Activated CD8-positive, alpha-beta memory T cell treated with anti-CD3 and anti-CD28 coated beads, Interleukin-2, amount 10 ng/mL, durations not matched to agents 7 days and 5 days (primary cell): ENCODE measurements at regions of chr22 and their contacts with region 1.

Region 1: GRCh38 chr22:50525390-50526068 is at the start of gene SCO2:
- DNase-seq: peak; percentile 97
- ATAC-seq: peak; percentile 59
- H3K4me3 Mint-ChIP-seq: peak within 1 kb of the TSS; percentile 80
- H3K27ac Mint-ChIP-seq: peak within 1 kb of the TSS; percentile 94
- H3K4me1 Mint-ChIP-seq: peaks cover 44% of the 10 kb centered on the region
- H3K27me3 Mint-ChIP-seq: no peaks in the 10 kb centered on the region
- total RNA-seq, gene SCO2: 9.1 to 11.6 TPM

Region 2: GRCh38 chr22:50250555-50251476 is 274.7 kb before region 1 on chr22 and contains the start of gene HDAC10:
- CTCF ChIA-PET with region 1: interaction called, 13 read pairs
- DNase-seq: peak; percentile 92
- ATAC-seq: peak; percentile 88
- H3K4me3 Mint-ChIP-seq: peak within 1 kb of the TSS; percentile 84
- H3K27ac Mint-ChIP-seq: peak within 1 kb of the TSS; percentile 85
- H3K4me1 Mint-ChIP-seq: peaks cover 27% of the 10 kb centered on the region
- H3K27me3 Mint-ChIP-seq: no peaks in the 10 kb centered on the region
- total RNA-seq, gene HDAC10: 75.2 to 96.3 TPM

Region 3: GRCh38 chr22:50474668-50475492 is 50.6 kb before region 1 on chr22 and contains the start of gene SBF1:
- CTCF ChIA-PET with region 1: interaction called, 20 read pairs
- DNase-seq: peak; percentile 92
- ATAC-seq: peak; percentile 83
- H3K4me3 Mint-ChIP-seq: peak within 1 kb of the TSS; percentile 93
- H3K27ac Mint-ChIP-seq: peak within 1 kb of the TSS; percentile 95
- H3K4me1 Mint-ChIP-seq: peaks cover 50% of the 10 kb centered on the region
- H3K27me3 Mint-ChIP-seq: peaks cover 10% of the 10 kb centered on the region
- total RNA-seq, gene SBF1: 192 to 207 TPM

Region 4: GRCh38 chr22:50544078-50544745 is 18.7 kb after region 1 on chr22:
- CTCF ChIA-PET with region 1: interaction called, 55 read pairs
- DNase-seq: peak; percentile 93
- ATAC-seq: peak; percentile 51
- H3K4me3 Mint-ChIP-seq: peak overlapping the region; percentile 49
- H3K27ac Mint-ChIP-seq: peak overlapping the region; percentile 92
- H3K4me1 Mint-ChIP-seq: peaks cover 65% of the 10 kb centered on the region
- H3K27me3 Mint-ChIP-seq: no peaks in the 10 kb centered on the region

Region 5: DNA sequence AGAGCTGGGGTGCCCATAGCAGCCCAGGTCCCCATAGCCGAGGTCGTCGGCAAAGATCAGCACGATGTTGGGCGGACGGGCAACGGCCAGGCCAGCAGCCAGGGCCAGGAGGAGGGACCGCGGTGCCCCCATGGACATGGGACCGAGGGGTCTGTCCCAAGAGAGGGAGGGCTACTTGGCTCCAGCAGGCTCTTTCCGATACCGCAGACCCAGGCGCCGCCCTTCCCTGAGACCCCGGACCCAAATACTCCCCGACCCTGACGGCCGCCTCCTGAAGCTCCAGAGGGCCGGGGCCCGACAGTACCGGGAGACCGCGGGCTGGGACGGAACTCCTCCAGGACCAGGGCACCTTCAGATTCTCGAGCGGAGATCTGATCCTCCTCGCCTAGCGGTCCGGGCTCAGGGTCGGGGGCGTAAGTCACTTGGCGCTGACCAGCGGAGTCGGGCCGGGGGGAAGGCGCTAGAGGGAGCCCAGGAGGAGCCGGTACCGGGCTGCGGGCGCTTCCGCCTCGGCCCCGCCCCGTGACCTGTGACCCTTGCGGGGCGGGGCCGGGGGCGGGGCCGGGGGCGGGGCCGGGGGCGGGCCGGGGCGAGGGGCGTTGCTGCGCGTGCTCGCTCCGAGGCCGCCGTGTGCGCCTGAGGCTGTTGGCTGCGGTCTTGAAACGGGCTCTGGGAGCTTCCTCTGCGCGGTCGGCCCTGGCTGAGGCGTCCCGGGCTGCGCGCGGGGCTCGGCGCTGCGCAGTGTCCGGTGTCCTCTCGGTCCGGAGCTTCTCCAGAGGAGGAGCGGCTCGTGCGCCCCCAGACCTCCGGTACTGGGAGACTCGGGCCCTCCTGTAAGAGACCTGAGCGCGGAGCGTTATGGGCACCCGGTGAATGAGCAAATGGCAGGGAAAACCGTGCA is 102.4 kb after region 1 on chr22 and contains the start of gene ARSA:
- CTCF ChIA-PET with region 1: interaction called, 81 read pairs
- DNase-seq: peak; percentile 87
- ATAC-seq: peak; percentile 92
- H3K4me3 Mint-ChIP-seq: peak within 1 kb of the TSS; percentile 76
- H3K27ac Mint-ChIP-seq: peak within 1 kb of the TSS; percentile 84
- H3K4me1 Mint-ChIP-seq: peaks cover 28% of the 10 kb centered on the region
- H3K27me3 Mint-ChIP-seq: no peaks in the 10 kb centered on the region
- total RNA-seq, gene ARSA: 49.6 to 68.2 TPM